Activated CD8-positive, alpha-beta T cell treated with anti-CD3 and anti-CD28 coated beads for 36 hours (primary cell): ENCODE measurements at regions of chr14 and their contacts with region 1.

Region 1: GRCh38 chr14:22319526-22320361 is 269.3 kb downstream of the DAD1 start:
- DNase-seq: peak; percentile 32
- ATAC-seq: peak; percentile 39
- H3K4me3 Mint-ChIP-seq: peak overlapping the region; percentile 64
- H3K27ac Mint-ChIP-seq: peak overlapping the region; percentile 52
- H3K4me1 Mint-ChIP-seq: no peaks in the 10 kb centered on the region
- H3K27me3 Mint-ChIP-seq: no peaks in the 10 kb centered on the region
- CTCF ChIP-seq: no peak

Region 2: GRCh38 chr14:22472935-22473854 is 153.5 kb after region 1 on chr14:
- CTCF ChIA-PET with region 1: no interaction called
- POLR2A ChIA-PET with region 1: no interaction called
- intact Hi-C with region 1: loop called (anchors 10 kb)
- DNase-seq: no peak
- ATAC-seq: no peak
- H3K4me3 Mint-ChIP-seq: no peak overlapping the region
- H3K27ac Mint-ChIP-seq: no peak overlapping the region
- H3K4me1 Mint-ChIP-seq: no peaks in the 10 kb centered on the region
- H3K27me3 Mint-ChIP-seq: no peaks in the 10 kb centered on the region
- CTCF ChIP-seq: no peak